Activated CD4-positive, alpha-beta memory T cell treated with anti-CD3 and anti-CD28 coated beads, Interleukin-2, amount 10 ng/mL, durations not matched to agents 7 days and 5 days (primary cell): ENCODE measurements at regions of chr6 and their contacts with region 1.

Region 1: DNA sequence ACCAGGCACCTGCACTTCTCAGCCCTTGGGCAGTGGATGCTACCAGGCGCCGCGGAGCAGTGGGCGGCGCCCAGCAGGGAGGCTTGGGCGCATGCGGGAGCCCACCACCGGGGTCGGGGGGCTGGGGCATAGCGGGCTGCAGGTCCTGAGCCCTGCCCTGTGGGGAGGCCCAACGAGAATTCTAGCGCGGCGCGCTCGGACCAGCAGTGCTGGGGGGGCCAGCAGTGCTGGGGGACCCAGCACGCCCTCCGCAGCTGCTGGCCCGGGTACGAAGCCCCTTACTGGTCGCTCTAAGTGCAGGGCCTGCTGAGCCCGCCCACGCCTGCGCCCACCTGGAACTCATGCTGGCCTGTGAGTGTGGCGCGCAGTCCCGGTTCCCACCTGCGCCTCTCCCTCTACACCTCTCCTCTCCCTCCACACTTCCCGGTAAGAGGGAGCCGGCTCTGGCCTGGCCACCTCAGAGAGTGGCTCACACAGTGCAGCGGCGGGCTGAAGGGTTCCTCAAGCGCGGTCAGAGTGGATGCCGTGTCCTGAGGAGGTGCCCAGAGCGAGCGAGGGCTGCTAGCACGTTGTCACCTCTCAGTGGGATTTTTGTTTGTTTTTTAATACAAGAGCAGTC is 28.5 kb upstream of the SERPINB1 start:
- DNase-seq: no peak
- H3K4me3 Mint-ChIP-seq: no peak overlapping the region
- H3K27ac Mint-ChIP-seq: no peak overlapping the region
- H3K4me1 Mint-ChIP-seq: peaks cover 41% of the 10 kb centered on the region
- H3K27me3 Mint-ChIP-seq: no peaks in the 10 kb centered on the region

Region 2: GRCh38 chr6:2900821-2901644 is 30.9 kb after region 1 on chr6:
- CTCF ChIA-PET with region 1: no interaction called
- POLR2A ChIA-PET with region 1: interaction called, 15 read pairs
- DNase-seq: no peak
- H3K4me3 Mint-ChIP-seq: peak overlapping the region; percentile 99
- H3K27ac Mint-ChIP-seq: peak overlapping the region; percentile 82
- H3K4me1 Mint-ChIP-seq: peaks cover 55% of the 10 kb centered on the region
- H3K27me3 Mint-ChIP-seq: peaks cover 3% of the 10 kb centered on the region